CD8-positive, alpha-beta T cell (primary cell): ENCODE measurements at regions of chr15 and their contacts with region 1.

Region 1: DNA sequence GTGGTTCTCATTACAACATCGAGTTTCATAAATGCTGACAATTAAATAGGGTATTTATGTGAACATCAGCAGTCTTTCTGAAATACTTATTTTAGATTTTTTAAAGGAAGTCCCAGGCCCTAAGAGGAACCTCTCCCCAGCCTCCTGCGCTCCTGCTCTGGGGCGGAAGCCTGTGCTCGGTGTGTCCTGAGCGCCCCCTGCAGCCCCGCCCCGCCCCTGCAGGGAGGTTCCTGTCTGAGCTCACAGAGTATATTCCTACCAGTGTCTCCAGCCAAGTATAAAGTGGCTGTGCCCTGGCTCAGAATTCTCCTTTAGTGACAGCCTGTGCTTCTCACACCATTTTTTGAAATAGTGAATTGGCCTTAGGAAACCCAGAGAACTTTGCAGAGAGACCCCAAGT is 567.9 kb downstream of the GOLGA6L6 start:
- DNase-seq: peak in 1 of 9 experiments; percentile 6
- ATAC-seq: no peak
- H3K4me3 ChIP-seq: no peak overlapping the region
- H3K4me3 Mint-ChIP-seq: no peak overlapping the region
- H3K27ac ChIP-seq: no peak overlapping the region
- H3K27ac Mint-ChIP-seq: no peak overlapping the region
- H3K4me1 ChIP-seq: no peaks in the 10 kb centered on the region
- H3K4me1 Mint-ChIP-seq: no peaks in the 10 kb centered on the region
- H3K27me3 ChIP-seq: no peaks in the 10 kb centered on the region
- H3K27me3 Mint-ChIP-seq: no peaks in the 10 kb centered on the region
- CTCF ChIP-seq: no peak

Region 2: DNA sequence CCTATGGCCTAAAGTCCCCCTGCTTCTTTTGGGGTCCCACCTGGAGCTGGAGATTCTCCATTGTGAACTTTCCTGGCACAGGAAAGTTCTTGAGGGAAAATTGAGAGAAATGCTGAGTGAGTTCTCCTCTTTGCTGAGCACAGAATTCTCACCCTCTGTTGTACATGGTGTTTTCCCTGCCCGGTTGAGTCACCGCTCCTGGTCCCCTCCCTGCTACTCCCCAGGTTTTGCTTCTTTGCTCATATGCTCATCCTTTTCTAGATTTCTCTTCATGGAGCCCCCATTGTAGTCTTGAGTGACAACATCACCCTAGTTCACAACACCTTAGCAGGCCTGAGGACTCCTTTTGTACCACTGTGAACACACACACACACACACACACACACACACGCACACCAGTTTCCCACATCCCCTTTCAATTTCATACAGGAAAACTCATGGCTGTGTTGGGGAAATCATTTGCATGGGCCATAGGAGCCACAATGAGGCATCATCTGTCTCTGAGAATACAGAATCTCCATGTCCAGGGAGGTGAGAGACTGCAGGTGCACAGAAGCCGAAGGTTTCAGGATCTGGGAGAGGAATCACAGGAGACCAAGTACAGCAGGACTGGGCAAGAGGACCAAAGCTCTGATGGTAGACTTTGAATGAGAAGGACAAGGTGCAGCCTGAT is 17.5 kb before region 1 on chr15:
- CTCF ChIA-PET with region 1: no interaction called
- POLR2A ChIA-PET with region 1: no interaction called
- intact Hi-C with region 1: no loop called
- DNase-seq: no peak
- ATAC-seq: no peak
- H3K4me3 ChIP-seq: no peak overlapping the region
- H3K4me3 Mint-ChIP-seq: no peak overlapping the region
- H3K27ac ChIP-seq: no peak overlapping the region
- H3K27ac Mint-ChIP-seq: no peak overlapping the region
- H3K4me1 ChIP-seq: no peaks in the 10 kb centered on the region
- H3K4me1 Mint-ChIP-seq: no peaks in the 10 kb centered on the region
- H3K27me3 ChIP-seq: no peaks in the 10 kb centered on the region
- H3K27me3 Mint-ChIP-seq: no peaks in the 10 kb centered on the region
- CTCF ChIP-seq: no peak

Region 3: GRCh38 chr15:19987389-19988048 is 13.8 kb after region 1 on chr15:
- CTCF ChIA-PET with region 1: no interaction called
- POLR2A ChIA-PET with region 1: no interaction called
- intact Hi-C with region 1: loop called in 1 of 2 experiments (anchors 1 kb)
- DNase-seq: no peak
- ATAC-seq: no peak
- H3K4me3 ChIP-seq: no peak overlapping the region
- H3K4me3 Mint-ChIP-seq: no peak overlapping the region
- H3K27ac ChIP-seq: no peak overlapping the region
- H3K27ac Mint-ChIP-seq: no peak overlapping the region
- H3K4me1 ChIP-seq: no peaks in the 10 kb centered on the region
- H3K4me1 Mint-ChIP-seq: no peaks in the 10 kb centered on the region
- H3K27me3 ChIP-seq: no peaks in the 10 kb centered on the region
- H3K27me3 Mint-ChIP-seq: peaks cover 2% of the 10 kb centered on the region
- CTCF ChIP-seq: no peak